Activated CD4-positive, alpha-beta memory T cell treated with anti-CD3 and anti-CD28 coated beads for 36 hours (primary cell): ENCODE measurements at regions of chr12 and their contacts with region 1.

Region 1: GRCh38 chr12:116060764-116061163 is 216.7 kb downstream of the MED13L start:
- DNase-seq: no peak
- H3K4me3 Mint-ChIP-seq: peak overlapping the region; percentile 58
- H3K27ac Mint-ChIP-seq: peak overlapping the region; percentile 47
- H3K4me1 Mint-ChIP-seq: peaks cover 48% of the 10 kb centered on the region
- H3K27me3 Mint-ChIP-seq: no peaks in the 10 kb centered on the region

Region 2: GRCh38 chr12:116015525-116015924 is 45.2 kb before region 1 on chr12:
- CTCF ChIA-PET with region 1: interaction called, 3 read pairs
- POLR2A ChIA-PET with region 1: no interaction called
- intact Hi-C with region 1: loop called (anchors 5 kb)
- DNase-seq: no peak
- H3K4me3 Mint-ChIP-seq: no peak overlapping the region
- H3K27ac Mint-ChIP-seq: no peak overlapping the region
- H3K4me1 Mint-ChIP-seq: peaks cover 2% of the 10 kb centered on the region
- H3K27me3 Mint-ChIP-seq: no peaks in the 10 kb centered on the region

Region 3: GRCh38 chr12:116087962-116088361 is 27.2 kb after region 1 on chr12:
- CTCF ChIA-PET with region 1: interaction called, 3 read pairs
- POLR2A ChIA-PET with region 1: interaction called, 3 read pairs
- intact Hi-C with region 1: loop called (anchors 2 kb)
- DNase-seq: no peak
- H3K4me3 Mint-ChIP-seq: no peak overlapping the region
- H3K27ac Mint-ChIP-seq: no peak overlapping the region
- H3K4me1 Mint-ChIP-seq: peaks cover 45% of the 10 kb centered on the region
- H3K27me3 Mint-ChIP-seq: no peaks in the 10 kb centered on the region

Region 4: DNA sequence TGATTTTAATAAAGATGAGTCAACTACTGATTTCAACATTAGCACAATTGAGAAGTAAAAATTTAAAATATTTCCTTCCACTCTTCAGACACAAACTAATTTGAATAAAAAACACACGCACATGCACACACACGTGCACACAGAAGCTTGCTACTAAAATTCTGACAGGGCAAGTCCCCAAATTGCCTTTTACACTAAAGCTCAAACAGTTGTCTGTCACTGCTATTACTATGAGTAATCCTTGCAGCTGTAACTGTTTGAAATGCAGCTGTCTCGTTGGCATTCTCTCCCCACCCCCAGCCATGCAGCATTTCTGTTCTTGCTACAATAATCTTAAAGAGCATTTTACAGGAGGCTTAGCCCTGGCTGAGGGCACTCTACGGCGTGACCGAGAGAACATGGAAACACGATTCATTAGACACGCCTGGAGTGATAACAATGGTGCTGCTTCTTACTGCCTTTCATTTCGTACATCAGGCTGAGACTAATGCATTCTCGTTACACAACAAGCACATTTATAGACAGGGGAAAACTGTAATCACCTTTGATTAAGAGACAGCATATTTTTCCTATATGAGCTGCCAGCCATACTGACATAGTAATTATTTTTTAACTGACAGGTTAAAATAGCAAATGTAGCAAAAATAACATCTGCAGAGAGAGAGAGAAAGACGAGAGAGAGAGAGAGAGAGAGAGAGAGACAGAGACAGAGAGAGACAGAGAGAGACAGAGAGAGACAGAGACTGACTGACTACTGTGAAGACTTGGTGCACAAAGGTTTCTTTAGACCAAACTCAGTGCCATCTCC is 62.9 kb after region 1 on chr12:
- CTCF ChIA-PET with region 1: no interaction called
- POLR2A ChIA-PET with region 1: no interaction called
- intact Hi-C with region 1: loop called (anchors 5 kb)
- DNase-seq: peak; percentile 67
- H3K4me3 Mint-ChIP-seq: peak overlapping the region; percentile 49
- H3K27ac Mint-ChIP-seq: peak overlapping the region; percentile 10
- H3K4me1 Mint-ChIP-seq: peaks cover 68% of the 10 kb centered on the region
- H3K27me3 Mint-ChIP-seq: no peaks in the 10 kb centered on the region